Natural killer cell (primary cell): ENCODE measurements at regions of chr7 and their contacts with region 1.

Region 1: DNA sequence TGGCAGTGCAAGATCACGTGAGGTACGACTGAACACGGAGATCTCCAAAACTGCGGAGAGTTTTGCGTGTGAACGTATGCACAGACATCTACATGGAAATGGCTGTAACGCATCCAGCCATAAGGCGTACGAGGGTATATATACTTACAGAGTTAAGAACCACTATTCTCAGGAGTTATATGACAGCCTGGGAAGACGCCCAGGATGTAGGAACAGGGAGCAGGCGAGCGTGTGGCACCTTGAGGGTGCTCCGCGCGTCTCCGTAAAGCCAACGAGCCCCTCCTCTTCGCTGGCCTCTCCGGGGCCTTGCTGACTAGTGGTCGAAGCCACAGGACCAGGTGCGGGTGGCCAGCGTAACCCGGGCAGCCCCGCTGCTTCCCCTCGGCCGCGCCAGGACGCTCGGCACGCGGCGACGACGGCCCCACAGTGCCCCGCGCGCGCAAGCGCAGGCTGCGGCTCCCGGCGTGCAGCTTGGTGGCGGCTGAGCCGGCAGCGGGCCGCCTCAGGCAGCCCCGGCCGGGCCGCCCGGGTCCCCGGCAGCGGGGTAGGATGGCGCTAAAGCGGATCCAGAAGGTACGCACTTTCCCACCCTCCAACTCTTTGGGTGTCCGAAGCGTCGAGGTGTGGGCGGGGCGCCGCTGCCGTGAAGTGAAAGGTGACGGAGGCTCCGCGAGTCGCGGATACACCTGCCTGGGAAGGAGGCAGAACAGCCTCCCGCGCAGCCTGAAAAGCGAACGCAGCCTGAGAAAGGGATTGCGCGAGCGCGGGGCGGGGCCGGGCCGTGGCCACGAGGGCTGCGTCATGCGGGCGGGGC is at the start of gene UBE2D4:
- DNase-seq: peak; percentile 83 to 92
- ATAC-seq: peak; percentile 89 to 95 (median 90)
- H3K4me3 ChIP-seq: peak within 1 kb of the TSS; percentile 74
- H3K4me3 Mint-ChIP-seq: peak within 1 kb of the TSS; percentile 88
- H3K27ac ChIP-seq: peak within 1 kb of the TSS; percentile 98
- H3K27ac Mint-ChIP-seq: peak within 1 kb of the TSS; percentile 86 to 89
- H3K4me1 ChIP-seq: peaks cover 19% of the 10 kb centered on the region
- H3K4me1 Mint-ChIP-seq: peaks cover 5 to 27% of the 10 kb centered on the region in 2 donors
- H3K27me3 ChIP-seq: no peaks in the 10 kb centered on the region
- H3K27me3 Mint-ChIP-seq: no peaks in the 10 kb centered on the region
- CTCF ChIP-seq: no peak
- total RNA-seq, gene UBE2D4: 5.3 to 10.6 (median 9.6) TPM

Region 2: DNA sequence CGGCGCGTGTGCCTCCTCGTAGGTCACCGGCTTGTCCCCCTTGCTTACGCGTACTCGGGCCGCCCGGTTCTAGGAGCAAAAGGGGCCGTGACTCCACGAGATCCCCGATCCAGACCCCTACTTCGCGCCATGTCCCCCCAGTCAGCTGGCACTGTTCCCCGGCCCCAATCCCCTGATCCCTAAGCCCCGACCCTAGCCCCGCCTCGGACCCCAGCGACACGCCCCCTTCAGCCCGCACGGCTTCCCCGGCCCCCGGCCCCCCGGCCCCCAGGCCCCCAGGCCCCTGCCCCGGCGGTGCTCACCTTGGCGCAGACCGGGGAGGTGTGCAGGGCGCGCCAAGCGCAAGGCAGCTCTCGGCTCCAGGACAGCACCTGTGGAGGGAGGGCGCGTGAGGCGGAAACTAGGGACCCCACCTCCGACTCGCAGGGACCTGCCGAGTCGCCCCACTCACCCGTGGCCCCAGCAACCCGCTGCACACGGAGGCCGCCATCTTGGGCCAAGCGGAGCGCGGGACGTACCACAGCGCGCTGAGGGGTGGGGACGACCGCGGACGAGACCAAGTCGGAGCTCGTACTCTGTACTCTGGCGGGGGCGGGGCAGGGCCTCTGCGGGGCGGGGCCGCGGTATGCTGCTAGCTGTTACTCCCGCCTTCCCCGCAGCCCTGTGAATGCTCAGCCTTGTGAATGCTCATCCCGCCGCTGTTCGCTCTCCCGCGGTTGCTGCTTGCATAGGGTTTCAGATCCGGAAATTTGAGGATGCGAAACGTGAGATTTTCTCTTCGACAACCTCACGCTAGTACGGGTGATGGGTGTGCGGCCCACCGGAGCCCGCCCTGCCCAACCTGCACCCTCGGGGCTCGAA is 57.0 kb before region 1 on chr7 and contains the start of gene MRPS24:
- intact Hi-C with region 1: loop called (anchors 2 kb)
- DNase-seq: peak; percentile 89 to 98
- ATAC-seq: peak; percentile 98 to 100 (median 99)
- H3K4me3 ChIP-seq: peak within 1 kb of the TSS; percentile 67
- H3K4me3 Mint-ChIP-seq: peak within 1 kb of the TSS; percentile 96
- H3K27ac ChIP-seq: peak within 1 kb of the TSS; percentile 70
- H3K27ac Mint-ChIP-seq: peak within 1 kb of the TSS; percentile 95
- H3K4me1 ChIP-seq: peaks cover 17% of the 10 kb centered on the region
- H3K4me1 Mint-ChIP-seq: peaks cover 16 to 21% of the 10 kb centered on the region in 2 donors
- H3K27me3 ChIP-seq: no peaks in the 10 kb centered on the region
- H3K27me3 Mint-ChIP-seq: peaks cover 0 to 1% of the 10 kb centered on the region in 2 donors
- CTCF ChIP-seq: no peak
- total RNA-seq, gene MRPS24: 34.8 to 37.4 (median 35.7) TPM